Natural killer cell (primary cell): ENCODE measurements at regions of chr17 and their contacts with region 1.

Region 1: DNA sequence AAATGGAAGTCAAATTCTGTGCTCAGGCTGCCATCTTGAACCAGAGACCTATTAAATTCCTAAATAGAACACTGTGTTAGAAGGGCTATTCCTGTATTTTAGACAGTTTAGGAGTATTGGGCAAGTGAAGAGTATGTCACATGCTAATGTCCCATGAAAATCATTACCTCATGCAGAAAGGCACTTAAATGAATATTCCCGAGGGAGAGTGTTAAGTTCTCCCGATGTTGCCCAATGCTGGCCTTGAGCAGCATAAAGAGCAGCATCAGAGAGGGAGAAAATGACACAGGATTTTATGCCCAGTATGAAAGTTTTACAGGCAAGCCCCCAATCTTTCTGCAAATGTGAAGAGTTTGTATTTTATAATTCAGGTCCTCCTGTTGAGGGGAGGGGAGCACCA is 28.2 kb upstream of the SHISA6 start:
- DNase-seq: no peak
- ATAC-seq: no peak
- H3K4me3 ChIP-seq: no peak overlapping the region
- H3K4me3 Mint-ChIP-seq: no peak overlapping the region
- H3K27ac ChIP-seq: no peak overlapping the region
- H3K27ac Mint-ChIP-seq: no peak overlapping the region
- H3K4me1 ChIP-seq: no peaks in the 10 kb centered on the region
- H3K4me1 Mint-ChIP-seq: no peaks in the 10 kb centered on the region
- H3K27me3 ChIP-seq: no peaks in the 10 kb centered on the region
- H3K27me3 Mint-ChIP-seq: no peaks in the 10 kb centered on the region
- CTCF ChIP-seq: no peak

Region 2: DNA sequence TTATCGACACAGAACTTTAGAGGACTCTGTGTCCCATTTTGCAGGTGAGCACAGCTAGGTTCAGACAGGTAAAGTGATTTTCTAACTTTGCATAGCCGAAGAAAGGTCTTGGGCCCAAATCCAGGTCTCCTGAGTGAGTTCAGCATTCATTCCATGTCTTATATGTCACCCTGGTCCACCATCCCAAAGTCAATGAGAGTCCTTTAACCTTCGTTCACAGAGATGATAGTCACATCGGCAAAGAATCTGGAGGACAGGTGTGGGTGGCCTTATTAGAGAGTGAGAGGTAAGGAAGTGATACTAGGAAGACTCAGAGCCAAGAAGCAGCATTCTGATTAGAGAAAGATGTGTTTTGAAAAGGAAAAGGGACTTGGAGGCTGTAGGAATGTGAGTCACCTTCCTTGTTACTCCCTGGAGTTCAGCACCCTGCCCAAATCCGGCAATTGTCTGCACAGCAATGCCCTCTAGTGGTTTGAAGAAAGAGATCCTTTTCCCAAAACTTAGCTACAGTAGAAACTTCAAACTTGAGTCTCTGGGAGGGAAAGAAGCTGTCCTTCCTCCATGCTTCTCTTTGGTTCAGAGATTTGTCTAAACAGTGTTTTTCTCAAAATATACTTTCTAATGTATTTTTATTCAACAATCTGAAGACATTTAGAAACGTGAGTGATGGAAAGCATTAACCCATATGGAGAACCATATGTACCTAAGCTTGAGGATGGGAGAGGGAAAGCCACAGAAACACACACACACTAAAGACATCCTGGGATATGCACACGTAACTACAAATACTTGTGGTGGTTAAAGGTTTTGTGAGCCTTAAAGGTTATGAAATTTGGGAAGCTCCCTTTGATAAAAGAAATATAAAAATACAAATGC is 68.2 kb before region 1 on chr17:
- intact Hi-C with region 1: no loop called
- DNase-seq: peak in 1 of 2 donors; percentile 3
- ATAC-seq: no peak
- H3K4me3 ChIP-seq: no peak overlapping the region
- H3K4me3 Mint-ChIP-seq: no peak overlapping the region
- H3K27ac ChIP-seq: no peak overlapping the region
- H3K27ac Mint-ChIP-seq: no peak overlapping the region
- H3K4me1 ChIP-seq: no peaks in the 10 kb centered on the region
- H3K4me1 Mint-ChIP-seq: no peaks in the 10 kb centered on the region
- H3K27me3 ChIP-seq: no peaks in the 10 kb centered on the region
- H3K27me3 Mint-ChIP-seq: peaks cover 0 to 5% of the 10 kb centered on the region in 2 donors
- CTCF ChIP-seq: no peak

Region 3: DNA sequence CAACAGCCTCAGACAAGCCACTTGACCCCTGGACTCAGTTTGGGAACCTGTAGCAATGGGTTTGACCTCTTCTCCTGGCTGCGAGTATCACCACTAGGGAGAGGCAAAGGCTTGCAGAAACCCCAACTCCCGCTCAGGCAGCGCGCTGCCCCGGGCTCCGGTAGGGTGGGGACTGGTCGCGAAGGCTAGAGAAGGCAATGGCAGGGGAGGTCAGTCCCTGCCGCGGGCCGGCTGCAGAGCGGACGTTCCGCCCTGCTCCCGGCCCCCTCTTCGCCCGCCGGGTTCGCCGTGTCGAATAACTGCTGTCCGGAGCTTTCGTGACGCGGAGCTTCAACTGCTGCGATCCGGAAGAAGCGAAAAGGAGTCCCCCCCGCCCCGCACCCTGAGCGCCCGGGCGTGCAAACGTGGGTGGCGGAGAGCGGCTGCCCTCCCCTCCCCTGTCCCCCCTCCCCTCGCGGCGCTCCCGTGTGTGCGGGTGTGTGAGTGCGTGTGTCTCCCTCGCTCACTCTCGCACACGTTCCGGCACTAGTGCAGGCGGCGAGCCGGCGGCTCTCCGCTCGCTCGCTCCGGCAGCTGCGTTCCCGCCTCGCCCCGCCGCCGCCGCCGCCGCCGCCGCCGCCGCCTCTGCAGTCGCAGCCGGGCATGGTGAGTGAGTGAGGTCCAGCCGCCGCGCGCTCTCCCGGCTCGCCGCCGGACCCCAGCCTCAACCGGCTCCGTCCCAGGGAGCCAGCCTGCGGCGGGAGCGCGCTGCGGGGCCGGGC is 27.4 kb after region 1 on chr17:
- intact Hi-C with region 1: no loop called
- DNase-seq: no peak
- ATAC-seq: no peak
- H3K4me3 ChIP-seq: no peak overlapping the region
- H3K4me3 Mint-ChIP-seq: no peak overlapping the region
- H3K27ac ChIP-seq: no peak overlapping the region
- H3K27ac Mint-ChIP-seq: no peak overlapping the region
- H3K4me1 ChIP-seq: no peaks in the 10 kb centered on the region
- H3K4me1 Mint-ChIP-seq: peaks cover 0 to 5% of the 10 kb centered on the region in 2 donors
- H3K27me3 ChIP-seq: peaks cover 5% of the 10 kb centered on the region
- H3K27me3 Mint-ChIP-seq: peaks cover 49 to 54% of the 10 kb centered on the region in 2 donors
- CTCF ChIP-seq: no peak

Region 4: GRCh38 chr17:11278186-11278991 is 65.6 kb after region 1 on chr17:
- intact Hi-C with region 1: loop called (anchors 10 kb)
- DNase-seq: no peak
- ATAC-seq: no peak
- H3K4me3 ChIP-seq: no peak overlapping the region
- H3K4me3 Mint-ChIP-seq: no peak overlapping the region
- H3K27ac ChIP-seq: no peak overlapping the region
- H3K27ac Mint-ChIP-seq: no peak overlapping the region
- H3K4me1 ChIP-seq: no peaks in the 10 kb centered on the region
- H3K4me1 Mint-ChIP-seq: no peaks in the 10 kb centered on the region
- H3K27me3 ChIP-seq: no peaks in the 10 kb centered on the region
- H3K27me3 Mint-ChIP-seq: no peaks in the 10 kb centered on the region
- CTCF ChIP-seq: no peak